HepG2 (cell line): ENCODE measurements at regions of chr2 and their contacts with region 1.

Region 1: DNA sequence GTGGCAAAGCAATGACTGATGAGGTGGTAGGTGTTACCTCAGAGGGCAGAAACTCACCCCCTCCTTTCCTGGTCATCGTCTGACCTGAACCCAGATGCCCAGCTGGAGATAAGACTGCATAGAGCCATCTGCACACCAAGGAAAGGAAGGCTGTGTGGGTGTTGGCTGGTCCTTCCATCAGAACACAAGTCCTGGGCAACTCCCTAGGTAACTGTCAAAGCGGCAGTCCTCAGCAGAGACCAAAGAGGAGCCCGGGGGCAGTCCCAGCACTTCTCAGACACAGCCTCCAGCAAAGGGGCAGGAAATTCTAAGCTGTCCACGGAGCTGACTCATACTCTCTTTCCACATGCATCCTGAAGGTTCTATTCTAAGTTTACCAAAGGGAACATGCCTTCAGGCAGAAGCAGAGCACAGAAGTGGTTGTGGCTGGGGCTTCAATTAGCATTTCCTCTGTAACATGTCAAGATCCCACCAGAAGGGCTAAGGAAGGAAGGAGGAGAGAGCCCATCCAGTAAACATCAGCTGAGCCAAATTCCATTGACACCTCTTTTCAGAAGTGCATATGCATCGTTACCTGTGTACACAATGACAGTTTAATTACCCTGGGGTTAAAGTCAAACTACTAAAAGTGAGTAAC is 54.7 kb downstream of the SPRED2 start:
- DNase-seq: no peak
- ATAC-seq: no peak
- H3K4me3 ChIP-seq: no peak overlapping the region
- H3K27ac ChIP-seq: peak overlapping the region; percentile 4
- H3K4me1 ChIP-seq: peaks cover 95% of the 10 kb centered on the region
- H3K27me3 ChIP-seq: no peaks in the 10 kb centered on the region
- CTCF ChIP-seq: no peak
- EP300 ChIP-seq: no peak
- POLR2A ChIP-seq: no peak
- RAD21 ChIP-seq: no peak

Region 2: GRCh38 chr2:65049010-65049669 is 328.5 kb before region 1 on chr2:
- CTCF ChIA-PET with region 1: no interaction called
- POLR2A ChIA-PET with region 1: no interaction called
- in situ Hi-C with region 1: no loop called
- intact Hi-C with region 1: no loop called
- DNase-seq: no peak
- ATAC-seq: no peak
- H3K4me3 ChIP-seq: no peak overlapping the region
- H3K27ac ChIP-seq: no peak overlapping the region
- H3K4me1 ChIP-seq: peaks cover 17% of the 10 kb centered on the region
- H3K27me3 ChIP-seq: no peaks in the 10 kb centered on the region
- CTCF ChIP-seq: no peak
- EP300 ChIP-seq: no peak
- POLR2A ChIP-seq: no peak
- RAD21 ChIP-seq: no peak

Region 3: DNA sequence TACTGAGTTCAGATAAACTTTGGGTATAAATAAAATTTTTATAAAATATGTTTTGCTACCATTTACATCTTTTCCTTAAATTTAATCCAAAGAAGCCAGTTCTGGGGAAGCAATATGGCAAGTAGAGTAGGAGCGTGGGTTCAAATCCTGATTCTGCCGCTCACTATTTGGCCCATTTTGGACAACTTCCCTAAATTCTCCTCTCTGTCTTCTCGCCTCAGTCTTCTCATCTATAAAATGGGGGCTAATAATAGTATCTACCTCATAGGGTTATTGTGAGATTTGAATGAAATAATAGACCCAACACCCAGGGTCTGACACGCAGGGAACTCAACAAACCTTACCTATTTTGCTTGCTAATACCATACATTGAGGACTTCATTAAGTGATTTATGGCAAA is 90.3 kb before region 1 on chr2:
- CTCF ChIA-PET with region 1: no interaction called
- POLR2A ChIA-PET with region 1: no interaction called
- in situ Hi-C with region 1: no loop called
- intact Hi-C with region 1: no loop called
- DNase-seq: no peak
- ATAC-seq: no peak
- H3K4me3 ChIP-seq: no peak overlapping the region
- H3K27ac ChIP-seq: no peak overlapping the region
- H3K4me1 ChIP-seq: peaks cover 26% of the 10 kb centered on the region
- H3K27me3 ChIP-seq: no peaks in the 10 kb centered on the region; a peak in 1 of 5 replicates
- CTCF ChIP-seq: no peak
- EP300 ChIP-seq: no peak
- POLR2A ChIP-seq: no peak
- RAD21 ChIP-seq: no peak

Region 4: GRCh38 chr2:65300761-65301711 is 76.6 kb before region 1 on chr2:
- CTCF ChIA-PET with region 1: no interaction called
- POLR2A ChIA-PET with region 1: interaction called, 15 read pairs
- in situ Hi-C with region 1: no loop called
- intact Hi-C with region 1: no loop called
- DNase-seq: peak; percentile 96
- ATAC-seq: peak; percentile 93
- H3K4me3 ChIP-seq: peak overlapping the region; percentile 55 to 68 (median 58)
- H3K27ac ChIP-seq: peak overlapping the region; percentile 47
- H3K4me1 ChIP-seq: peaks cover 52% of the 10 kb centered on the region
- H3K27me3 ChIP-seq: no peaks in the 10 kb centered on the region
- CTCF ChIP-seq: peak; percentile 41
- EP300 ChIP-seq: peak; percentile 50 to 93; a peak in 2 of 4 replicates
- POLR2A ChIP-seq: no peak
- RAD21 ChIP-seq: 0 out of 2 replicates have a peak, but pooled peaks have one; percentile 19

Region 5: DNA sequence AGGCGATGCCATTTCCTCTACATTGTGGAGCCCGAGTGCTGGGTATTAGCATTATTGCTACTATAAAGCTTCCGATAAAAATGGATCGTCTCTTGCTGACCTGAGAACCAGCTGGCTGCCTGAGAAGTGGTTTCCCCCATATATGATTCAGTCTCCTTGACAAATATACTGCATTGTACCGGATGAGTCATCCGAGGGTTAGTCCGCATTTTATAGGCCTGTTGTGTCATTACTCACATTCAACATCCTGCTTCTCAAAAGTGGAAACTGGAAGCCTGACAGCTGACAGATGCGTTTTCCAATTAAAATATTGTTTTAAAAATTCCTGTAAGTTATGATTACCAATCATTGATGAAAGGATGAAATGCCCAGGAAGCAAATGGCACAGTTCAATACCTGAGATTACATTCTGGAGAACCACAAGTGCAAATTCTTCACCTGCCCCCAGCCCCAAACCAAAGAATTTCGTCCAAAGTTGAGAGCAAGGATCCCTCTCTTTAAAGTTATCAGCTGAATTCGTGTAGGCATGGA is 11.0 kb before region 1 on chr2:
- CTCF ChIA-PET with region 1: no interaction called
- POLR2A ChIA-PET with region 1: interaction called, 44 read pairs
- in situ Hi-C with region 1: no loop called
- intact Hi-C with region 1: no loop called
- DNase-seq: peak; percentile 77
- ATAC-seq: no peak
- H3K4me3 ChIP-seq: no peak overlapping the region
- H3K27ac ChIP-seq: peak overlapping the region; percentile 11
- H3K4me1 ChIP-seq: peaks cover 100% of the 10 kb centered on the region
- H3K27me3 ChIP-seq: no peaks in the 10 kb centered on the region
- CTCF ChIP-seq: no peak
- EP300 ChIP-seq: peak in 1 of 2 experiments; percentile 31; a peak in 1 of 4 replicates
- POLR2A ChIP-seq: no peak
- RAD21 ChIP-seq: no peak

Region 6: GRCh38 chr2:65396348-65397026 is 18.8 kb after region 1 on chr2:
- CTCF ChIA-PET with region 1: no interaction called
- POLR2A ChIA-PET with region 1: interaction called, 24 read pairs
- in situ Hi-C with region 1: no loop called
- intact Hi-C with region 1: no loop called
- DNase-seq: peak; percentile 90
- ATAC-seq: peak; percentile 94
- H3K4me3 ChIP-seq: peak overlapping the region in 2 of 3 experiments; percentile 23 to 25; a peak in 4 of 6 replicates
- H3K27ac ChIP-seq: peak overlapping the region; percentile 55
- H3K4me1 ChIP-seq: peaks cover 58% of the 10 kb centered on the region
- H3K27me3 ChIP-seq: no peaks in the 10 kb centered on the region
- CTCF ChIP-seq: no peak
- EP300 ChIP-seq: peak in 1 of 2 experiments; percentile 85; a peak in 2 of 4 replicates
- POLR2A ChIP-seq: no peak
- RAD21 ChIP-seq: no peak

Region 7: GRCh38 chr2:65411056-65411795 is 33.6 kb after region 1 on chr2:
- CTCF ChIA-PET with region 1: no interaction called
- POLR2A ChIA-PET with region 1: no interaction called
- in situ Hi-C with region 1: no loop called
- intact Hi-C with region 1: no loop called
- DNase-seq: peak; percentile 43
- ATAC-seq: peak; percentile 58
- H3K4me3 ChIP-seq: no peak overlapping the region
- H3K27ac ChIP-seq: peak overlapping the region; percentile 2
- H3K4me1 ChIP-seq: peaks cover 58% of the 10 kb centered on the region
- H3K27me3 ChIP-seq: no peaks in the 10 kb centered on the region
- CTCF ChIP-seq: no peak
- EP300 ChIP-seq: no peak
- POLR2A ChIP-seq: no peak
- RAD21 ChIP-seq: no peak

Region 8: DNA sequence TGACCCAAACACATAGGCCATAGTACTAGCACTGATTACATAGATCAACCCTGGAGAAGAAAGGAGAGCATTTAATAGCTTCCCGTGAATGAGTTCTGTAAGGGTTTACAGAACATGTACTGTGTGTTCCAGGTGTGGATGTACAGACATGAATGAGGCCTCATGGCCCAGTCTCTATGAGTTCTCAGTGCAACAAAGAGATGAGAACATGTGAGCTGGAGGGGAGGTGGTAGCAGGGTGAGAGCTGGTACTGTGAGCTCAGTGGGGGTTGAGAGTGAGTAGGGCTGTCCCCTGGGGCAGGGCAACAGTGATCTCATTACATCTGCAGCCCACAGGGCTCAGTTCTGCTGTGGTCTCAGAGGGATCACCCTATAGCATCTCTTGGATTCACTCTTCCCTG is 97.3 kb after region 1 on chr2:
- CTCF ChIA-PET with region 1: no interaction called
- POLR2A ChIA-PET with region 1: no interaction called
- in situ Hi-C with region 1: no loop called
- intact Hi-C with region 1: no loop called
- DNase-seq: no peak
- ATAC-seq: no peak
- H3K4me3 ChIP-seq: no peak overlapping the region
- H3K27ac ChIP-seq: no peak overlapping the region
- H3K4me1 ChIP-seq: no peaks in the 10 kb centered on the region
- H3K27me3 ChIP-seq: no peaks in the 10 kb centered on the region
- CTCF ChIP-seq: no peak
- EP300 ChIP-seq: no peak
- POLR2A ChIP-seq: no peak
- RAD21 ChIP-seq: no peak